MCF 10A (cell line): ENCODE measurements at regions of chr11 and their contacts with region 1.

Region 1: GRCh38 chr11:110092515-110093404 is at the start of gene ZC3H12C:
- DNase-seq: peak; percentile 93
- H3K4me3 Mint-ChIP-seq: peak within 1 kb of the TSS; percentile 98
- H3K27ac Mint-ChIP-seq: peak within 1 kb of the TSS; percentile 98
- H3K4me1 Mint-ChIP-seq: peaks cover 26% of the 10 kb centered on the region
- H3K27me3 Mint-ChIP-seq: no peaks in the 10 kb centered on the region
- CTCF ChIP-seq: peak; percentile 41
- total RNA-seq, gene ZC3H12C: 30.9 and 37.7 TPM in 2 replicates

Region 2: GRCh38 chr11:109707411-109707810 is 385.3 kb before region 1 on chr11:
- CTCF ChIA-PET with region 1: no interaction called
- POLR2A ChIA-PET with region 1: no interaction called
- intact Hi-C with region 1: no loop called
- DNase-seq: no peak
- H3K4me3 Mint-ChIP-seq: no peak overlapping the region
- H3K27ac Mint-ChIP-seq: no peak overlapping the region
- H3K4me1 Mint-ChIP-seq: no peaks in the 10 kb centered on the region
- H3K27me3 Mint-ChIP-seq: no peaks in the 10 kb centered on the region
- CTCF ChIP-seq: no peak

Region 3: DNA sequence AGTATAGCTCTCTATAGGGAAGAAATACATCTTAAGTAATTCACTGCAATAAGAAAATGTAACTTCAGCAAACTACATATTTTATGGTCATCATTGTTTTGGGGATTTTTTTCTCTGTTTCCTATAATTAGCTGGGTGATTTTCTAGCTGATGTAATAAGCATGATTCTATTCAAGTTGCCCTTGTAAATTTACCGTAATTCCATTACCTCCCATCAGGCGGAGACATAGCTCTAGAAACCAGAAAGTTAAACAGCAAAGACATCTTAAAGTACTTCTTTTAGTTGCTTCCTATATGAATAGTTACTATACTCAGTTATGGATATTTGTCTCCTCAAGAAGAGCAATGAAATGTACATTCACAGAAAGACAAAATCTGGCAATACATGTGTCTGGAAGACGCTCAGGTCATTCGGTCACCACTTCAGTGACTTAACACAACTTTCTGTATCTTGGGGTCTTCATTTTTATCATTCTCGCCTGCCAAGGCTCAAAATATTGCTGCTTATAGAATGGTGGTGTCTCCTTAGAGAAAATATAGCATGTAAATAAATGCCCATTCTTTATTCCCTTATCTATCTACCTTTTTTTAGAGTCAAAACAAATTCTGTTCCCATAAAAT is 239.5 kb before region 1 on chr11:
- CTCF ChIA-PET with region 1: no interaction called
- POLR2A ChIA-PET with region 1: no interaction called
- intact Hi-C with region 1: loop called (anchors 10 kb)
- DNase-seq: peak; percentile 73
- H3K4me3 Mint-ChIP-seq: no peak overlapping the region
- H3K27ac Mint-ChIP-seq: no peak overlapping the region
- H3K4me1 Mint-ChIP-seq: peaks cover 8% of the 10 kb centered on the region
- H3K27me3 Mint-ChIP-seq: no peaks in the 10 kb centered on the region
- CTCF ChIP-seq: peak; percentile 63

Region 4: GRCh38 chr11:110026858-110027626 is 65.7 kb before region 1 on chr11:
- CTCF ChIA-PET with region 1: interaction called, 3 read pairs
- POLR2A ChIA-PET with region 1: interaction called, 67 read pairs
- intact Hi-C with region 1: no loop called
- DNase-seq: no peak
- H3K4me3 Mint-ChIP-seq: no peak overlapping the region
- H3K27ac Mint-ChIP-seq: no peak overlapping the region
- H3K4me1 Mint-ChIP-seq: peaks cover 10% of the 10 kb centered on the region
- H3K27me3 Mint-ChIP-seq: no peaks in the 10 kb centered on the region
- CTCF ChIP-seq: no peak

Region 5: GRCh38 chr11:110077831-110078325 is 14.9 kb before region 1 on chr11:
- CTCF ChIA-PET with region 1: interaction called, 8 read pairs
- POLR2A ChIA-PET with region 1: interaction called, 197 read pairs
- intact Hi-C with region 1: no loop called
- DNase-seq: peak; percentile 64
- H3K4me3 Mint-ChIP-seq: no peak overlapping the region
- H3K27ac Mint-ChIP-seq: peak overlapping the region; percentile 54
- H3K4me1 Mint-ChIP-seq: peaks cover 34% of the 10 kb centered on the region
- H3K27me3 Mint-ChIP-seq: no peaks in the 10 kb centered on the region
- CTCF ChIP-seq: no peak

Region 6: GRCh38 chr11:110130642-110131238 is 38.0 kb after region 1 on chr11:
- CTCF ChIA-PET with region 1: interaction called, 3 read pairs
- POLR2A ChIA-PET with region 1: interaction called, 89 read pairs
- intact Hi-C with region 1: no loop called
- DNase-seq: no peak
- H3K4me3 Mint-ChIP-seq: no peak overlapping the region
- H3K27ac Mint-ChIP-seq: peak overlapping the region; percentile 49
- H3K4me1 Mint-ChIP-seq: peaks cover 33% of the 10 kb centered on the region
- H3K27me3 Mint-ChIP-seq: no peaks in the 10 kb centered on the region
- CTCF ChIP-seq: no peak

Region 7: GRCh38 chr11:110185121-110185591 is 92.4 kb after region 1 on chr11:
- CTCF ChIA-PET with region 1: no interaction called
- POLR2A ChIA-PET with region 1: interaction called, 15 read pairs
- intact Hi-C with region 1: no loop called
- DNase-seq: peak; percentile 85
- H3K4me3 Mint-ChIP-seq: peak overlapping the region; percentile 17
- H3K27ac Mint-ChIP-seq: peak overlapping the region; percentile 89
- H3K4me1 Mint-ChIP-seq: peaks cover 41% of the 10 kb centered on the region
- H3K27me3 Mint-ChIP-seq: no peaks in the 10 kb centered on the region
- CTCF ChIP-seq: no peak

Region 8: GRCh38 chr11:110251837-110252236 is 159.1 kb after region 1 on chr11:
- CTCF ChIA-PET with region 1: interaction called, 6 read pairs
- POLR2A ChIA-PET with region 1: interaction called, 6 read pairs
- intact Hi-C with region 1: loop called (anchors 5 kb)
- DNase-seq: peak; percentile 97
- H3K4me3 Mint-ChIP-seq: peak overlapping the region; percentile 38
- H3K27ac Mint-ChIP-seq: peak overlapping the region; percentile 74
- H3K4me1 Mint-ChIP-seq: peaks cover 15% of the 10 kb centered on the region
- H3K27me3 Mint-ChIP-seq: no peaks in the 10 kb centered on the region
- CTCF ChIP-seq: no peak

Region 9: DNA sequence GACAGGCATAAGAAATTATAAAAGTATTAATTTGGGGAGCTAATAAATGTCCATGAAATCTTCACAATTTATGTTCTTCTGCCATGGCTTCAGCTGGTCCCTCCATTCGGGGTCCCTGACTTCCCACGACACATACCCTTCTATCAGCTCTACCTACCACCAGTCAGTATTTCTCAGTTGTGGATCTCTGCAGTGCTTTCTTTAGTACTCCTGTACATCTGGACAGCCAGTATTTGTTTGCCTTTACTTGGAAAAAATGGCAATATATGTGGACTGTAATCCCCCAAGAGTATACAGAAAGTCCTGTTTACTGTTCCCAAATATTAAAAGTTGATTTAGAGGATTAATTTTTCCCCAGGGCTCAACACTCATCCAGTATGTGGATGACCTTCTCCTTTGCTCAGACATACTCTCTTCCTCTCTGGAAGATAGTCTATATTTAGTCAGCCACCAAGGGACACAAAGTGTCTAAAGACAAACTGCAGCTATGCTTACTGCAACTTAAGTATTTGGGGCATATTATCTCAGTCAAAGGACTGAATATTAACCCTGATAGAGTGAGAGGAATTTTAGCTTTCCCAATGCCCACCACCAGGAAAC is 329.6 kb after region 1 on chr11:
- CTCF ChIA-PET with region 1: no interaction called
- POLR2A ChIA-PET with region 1: no interaction called
- intact Hi-C with region 1: no loop called
- DNase-seq: no peak
- H3K4me3 Mint-ChIP-seq: no peak overlapping the region
- H3K27ac Mint-ChIP-seq: no peak overlapping the region
- H3K4me1 Mint-ChIP-seq: peaks cover 12% of the 10 kb centered on the region
- H3K27me3 Mint-ChIP-seq: no peaks in the 10 kb centered on the region
- CTCF ChIP-seq: no peak